Activated CD4-positive, alpha-beta memory T cell treated with anti-CD3 and anti-CD28 coated beads for 36 hours (primary cell): ENCODE measurements at regions of chr1 and their contacts with region 1.

Region 1: GRCh38 chr1:155250633-155251449 is 4.4 kb downstream of the ENTREP3 start:
- DNase-seq: peak; percentile 97
- H3K4me3 Mint-ChIP-seq: peak overlapping the region; percentile 39
- H3K27ac Mint-ChIP-seq: peak overlapping the region; percentile 31
- H3K4me1 Mint-ChIP-seq: peaks cover 33% of the 10 kb centered on the region
- H3K27me3 Mint-ChIP-seq: no peaks in the 10 kb centered on the region

Region 2: DNA sequence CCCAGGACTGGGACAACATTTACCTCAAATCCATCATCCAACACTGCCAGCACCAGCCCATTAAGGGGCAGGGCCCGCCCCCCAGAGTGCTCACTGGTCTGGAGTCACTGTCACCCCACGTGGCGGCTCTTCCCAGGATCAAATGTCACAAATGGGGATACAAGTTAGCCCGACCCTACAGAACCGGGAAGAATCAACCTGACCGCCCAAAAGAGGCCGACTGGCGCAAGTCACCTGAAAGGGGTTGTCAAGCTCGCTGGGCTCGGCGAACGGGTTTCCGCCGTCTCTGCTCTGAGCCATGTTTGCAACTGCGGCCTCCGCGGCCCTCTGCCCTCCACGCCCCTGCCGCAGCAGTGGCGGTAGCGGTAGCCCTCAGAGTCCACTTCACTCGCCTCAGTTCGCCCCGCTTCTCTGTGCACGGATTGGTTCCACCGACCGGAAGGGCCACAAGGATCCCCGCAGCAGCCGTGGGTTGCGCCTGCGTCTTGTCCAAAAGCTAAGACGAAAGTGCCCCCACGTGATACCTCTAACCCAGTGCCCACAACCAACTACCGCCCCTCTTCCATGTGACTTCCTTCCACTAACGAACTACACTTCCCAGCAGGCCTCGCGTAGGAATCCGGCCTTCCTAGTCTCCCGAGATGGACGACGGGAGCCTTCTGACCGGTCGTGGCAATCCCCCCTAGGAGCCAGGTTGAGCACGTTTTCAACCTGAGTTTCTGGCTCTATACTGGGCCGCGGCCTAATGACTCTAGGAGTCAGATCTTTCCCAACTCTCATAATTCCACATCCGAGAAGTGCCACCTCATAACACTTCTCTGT is 11.2 kb after region 1 on chr1 and contains the start of gene SCAMP3:
- CTCF ChIA-PET with region 1: interaction called, 90 read pairs
- POLR2A ChIA-PET with region 1: interaction called, 3 read pairs
- intact Hi-C with region 1: no loop called
- DNase-seq: peak; percentile 94
- H3K4me3 Mint-ChIP-seq: peak within 1 kb of the TSS; percentile 98
- H3K27ac Mint-ChIP-seq: peak within 1 kb of the TSS; percentile 88
- H3K4me1 Mint-ChIP-seq: peaks cover 24% of the 10 kb centered on the region
- H3K27me3 Mint-ChIP-seq: no peaks in the 10 kb centered on the region
- total RNA-seq, gene SCAMP3: 89.6 to 91.7 TPM

Region 3: DNA sequence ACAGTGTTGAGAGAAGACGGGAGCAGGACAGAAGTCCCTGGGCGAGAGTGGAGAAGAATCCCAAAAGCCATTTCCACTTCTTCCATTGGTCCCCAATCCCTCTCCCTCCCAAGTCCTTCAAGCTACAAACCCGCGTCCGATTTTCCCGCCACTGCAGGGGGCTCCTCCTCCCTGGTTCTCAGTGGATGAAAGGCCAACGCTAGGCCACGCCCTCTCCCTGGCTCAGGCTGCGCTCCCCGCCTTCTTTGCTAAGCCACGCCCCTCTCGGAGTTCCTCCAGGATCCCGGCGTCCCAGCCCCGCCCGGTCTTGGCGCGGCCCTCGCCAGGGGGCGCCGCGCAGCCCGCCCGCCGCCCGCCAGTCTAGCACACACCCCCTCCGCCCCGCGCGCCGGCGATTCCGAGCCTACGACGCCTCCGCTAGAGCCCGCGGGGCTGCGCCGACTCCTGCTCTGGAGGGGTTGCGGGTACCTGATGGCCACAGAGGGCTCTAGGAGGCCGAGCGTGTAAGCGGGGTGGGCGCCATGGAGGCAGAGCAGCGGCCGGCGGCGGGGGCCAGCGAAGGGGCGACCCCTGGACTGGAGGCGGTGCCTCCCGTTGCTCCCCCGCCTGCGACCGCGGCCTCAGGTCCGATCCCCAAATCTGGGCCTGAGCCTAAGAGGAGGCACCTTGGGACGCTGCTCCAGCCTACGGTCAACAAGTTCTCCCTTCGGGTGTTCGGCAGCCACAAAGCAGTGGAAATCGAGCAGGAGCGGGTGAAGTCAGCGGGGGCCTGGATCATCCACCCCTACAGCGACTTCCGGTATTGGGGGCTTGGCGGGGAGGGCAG is 26.4 kb after region 1 on chr1 and contains the start of gene HCN3:
- CTCF ChIA-PET with region 1: interaction called, 39 read pairs
- POLR2A ChIA-PET with region 1: interaction called, 3 read pairs
- intact Hi-C with region 1: loop called (anchors 2 kb)
- DNase-seq: peak; percentile 96
- H3K4me3 Mint-ChIP-seq: peak within 1 kb of the TSS; percentile 65
- H3K27ac Mint-ChIP-seq: peak within 1 kb of the TSS; percentile 61
- H3K4me1 Mint-ChIP-seq: peaks cover 32% of the 10 kb centered on the region
- H3K27me3 Mint-ChIP-seq: no peaks in the 10 kb centered on the region
- total RNA-seq, gene HCN3: 1.9 to 2.4 TPM

Region 4: DNA sequence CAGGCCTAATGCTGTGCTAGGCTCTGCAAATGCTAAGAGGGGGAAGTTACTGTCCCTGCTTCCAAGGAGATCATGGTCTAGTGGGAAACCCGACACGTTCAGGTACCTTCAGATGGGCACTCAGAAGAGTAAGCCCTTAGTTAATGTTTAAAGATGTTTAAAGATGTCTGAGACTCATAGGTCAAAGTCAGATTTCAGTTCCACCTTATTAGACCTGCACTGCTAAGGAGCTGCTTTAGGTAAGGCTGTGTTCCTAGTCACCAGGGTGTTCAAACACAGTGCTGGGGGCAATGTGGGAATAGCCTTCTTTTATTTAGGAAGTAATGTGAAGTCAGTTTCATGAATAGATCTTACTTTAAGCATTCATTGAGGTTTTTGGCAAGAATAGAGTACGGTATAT is 66.1 kb after region 1 on chr1:
- CTCF ChIA-PET with region 1: interaction called, 188 read pairs
- POLR2A ChIA-PET with region 1: interaction called, 3 read pairs
- intact Hi-C with region 1: no loop called
- DNase-seq: no peak
- H3K4me3 Mint-ChIP-seq: no peak overlapping the region
- H3K27ac Mint-ChIP-seq: no peak overlapping the region
- H3K4me1 Mint-ChIP-seq: peaks cover 31% of the 10 kb centered on the region
- H3K27me3 Mint-ChIP-seq: no peaks in the 10 kb centered on the region

Region 5: GRCh38 chr1:155591770-155592169 is 340.9 kb after region 1 on chr1:
- CTCF ChIA-PET with region 1: interaction called, 7 read pairs
- POLR2A ChIA-PET with region 1: interaction called, 3 read pairs
- intact Hi-C with region 1: loop called (anchors 2 kb)
- DNase-seq: no peak
- H3K4me3 Mint-ChIP-seq: no peak overlapping the region
- H3K27ac Mint-ChIP-seq: no peak overlapping the region
- H3K4me1 Mint-ChIP-seq: no peaks in the 10 kb centered on the region
- H3K27me3 Mint-ChIP-seq: no peaks in the 10 kb centered on the region